K562 (cell line): ENCODE measurements at regions of chr5 and their contacts with region 1.

Region 1: GRCh38 chr5:137778772-137779564 is 24.8 kb upstream of the HNRNPA0 start:
- DNase-seq: peak; percentile 20 to 65 (median 28)
- ATAC-seq: peak; percentile 56; the same call in 1 of the 3 replicates
- H3K4me3 ChIP-seq: no peak overlapping the region
- H3K27ac ChIP-seq: no peak overlapping the region
- H3K4me1 ChIP-seq: no peaks in the 10 kb centered on the region
- H3K27me3 ChIP-seq: peaks cover 3 to 12% of the 10 kb centered on the region in 2 experiments; a peak in 2 of 5 replicates
- CTCF ChIP-seq: peak; percentile 59 to 83 (median 61); a peak in 5 of 6 replicates
- EP300 ChIP-seq: no peak
- POLR2A ChIP-seq: no peak
- RAD21 ChIP-seq: peak; percentile 71

Region 2: DNA sequence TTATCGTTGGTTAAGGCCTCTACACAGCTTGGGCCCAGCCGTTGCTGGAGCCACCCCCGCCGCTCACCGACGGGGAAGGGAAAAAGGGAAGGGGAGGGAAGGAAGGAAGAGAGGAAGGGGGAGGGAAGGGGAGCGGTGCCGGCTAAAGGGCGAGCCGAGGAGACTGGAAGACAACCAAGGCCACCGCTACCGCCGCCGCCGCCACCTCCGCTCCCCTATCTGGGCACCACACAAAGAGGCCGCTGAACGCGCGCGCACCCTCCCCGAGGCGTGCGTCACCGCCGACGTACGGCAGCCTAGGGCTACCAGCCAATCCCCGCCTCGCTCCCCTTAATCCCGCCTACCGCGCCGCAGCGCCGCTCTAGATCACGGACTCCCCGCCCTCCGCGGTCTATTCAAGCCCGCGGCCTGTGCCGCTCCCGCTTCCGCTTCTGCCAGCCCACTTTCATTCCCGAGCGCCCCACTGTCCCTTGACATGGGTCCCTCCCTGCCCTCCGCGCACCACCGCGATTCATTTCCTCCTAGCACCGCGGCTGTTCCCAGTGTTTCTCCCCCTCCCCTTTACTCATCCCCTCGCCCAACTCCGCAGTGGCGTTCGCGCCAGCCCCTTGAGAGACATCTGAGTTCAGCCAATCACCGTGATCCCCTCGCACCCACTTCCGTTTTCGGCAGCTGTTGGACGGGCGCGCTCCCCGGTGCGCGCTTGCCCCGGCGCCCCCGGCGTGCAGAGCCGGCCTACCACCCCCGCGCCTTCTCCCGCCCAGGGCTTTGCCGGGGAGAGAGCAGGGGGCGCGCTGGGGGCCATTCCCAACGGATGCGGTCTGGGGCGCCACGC is 24.6 kb before region 1 on chr5 and contains the start of gene HNRNPA0:
- CTCF ChIA-PET with region 1: no interaction called
- POLR2A ChIA-PET with region 1: interaction called, 10 read pairs
- in situ Hi-C with region 1: no loop called
- intact Hi-C with region 1: no loop called
- DNase-seq: peak; percentile 94 to 98 (median 96)
- ATAC-seq: peak; percentile 91
- H3K4me3 ChIP-seq: peak within 1 kb of the TSS; percentile 76
- H3K27ac ChIP-seq: peak within 1 kb of the TSS; percentile 97
- H3K4me1 ChIP-seq: peaks cover 0 to 16% of the 10 kb centered on the region in 2 experiments; a peak in 3 of 5 replicates
- H3K27me3 ChIP-seq: peaks cover 5 to 6% of the 10 kb centered on the region in 2 experiments; a peak in 3 of 5 replicates
- CTCF ChIP-seq: peak in 2 of 3 experiments; percentile 17 to 33; a peak in 2 of 6 replicates
- EP300 ChIP-seq: peak; percentile 96
- POLR2A ChIP-seq: peak; percentile 98
- RAD21 ChIP-seq: no peak
- polyA plus RNA-seq, gene HNRNPA0: 5.0 to 5.7 TPM

Region 3: DNA sequence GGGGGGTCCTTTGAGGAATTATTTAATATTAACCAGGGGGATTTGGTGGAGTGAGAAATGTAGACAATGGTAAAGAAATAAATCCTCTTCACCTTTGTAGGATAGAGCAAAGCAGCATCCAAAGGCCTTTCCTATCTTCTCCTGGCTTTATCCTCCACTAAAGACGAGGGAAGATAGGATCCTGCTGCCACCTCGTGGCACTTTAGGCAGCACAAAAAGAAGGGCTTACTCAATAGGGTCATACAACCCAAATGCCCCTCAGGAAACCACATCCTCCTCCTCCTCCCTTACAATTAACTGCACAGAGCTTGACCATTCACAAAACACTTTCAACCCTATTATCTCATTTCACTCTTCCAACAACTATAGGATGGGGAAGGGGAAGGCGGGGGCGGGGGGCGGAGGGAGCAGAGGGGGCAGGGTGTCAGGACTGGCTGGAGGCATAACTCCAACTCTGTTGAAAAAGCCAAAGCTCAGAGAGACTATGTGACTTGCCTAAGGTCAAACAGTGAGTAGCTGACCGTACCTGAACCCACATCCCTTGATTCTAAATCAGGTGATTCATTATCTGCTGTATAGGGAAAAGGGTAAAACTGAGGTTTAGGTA is 43.3 kb after region 1 on chr5:
- CTCF ChIA-PET with region 1: no interaction called
- POLR2A ChIA-PET with region 1: no interaction called
- in situ Hi-C with region 1: no loop called
- intact Hi-C with region 1: loop called (anchors 2 kb)
- DNase-seq: peak; percentile 9 to 41 (median 28)
- ATAC-seq: peak; percentile 83
- H3K4me3 ChIP-seq: no peak overlapping the region
- H3K27ac ChIP-seq: no peak overlapping the region
- H3K4me1 ChIP-seq: no peaks in the 10 kb centered on the region
- H3K27me3 ChIP-seq: 0 out of 5 replicates have a peak, but pooled peaks cover 0 to 2% of the 10 kb centered on the region in 2 experiments
- CTCF ChIP-seq: peak; percentile 25 to 62 (median 56); a peak in 3 of 6 replicates
- EP300 ChIP-seq: no peak
- POLR2A ChIP-seq: no peak
- RAD21 ChIP-seq: peak in 1 of 2 experiments; percentile 54; a peak in 2 of 4 replicates

Region 4: DNA sequence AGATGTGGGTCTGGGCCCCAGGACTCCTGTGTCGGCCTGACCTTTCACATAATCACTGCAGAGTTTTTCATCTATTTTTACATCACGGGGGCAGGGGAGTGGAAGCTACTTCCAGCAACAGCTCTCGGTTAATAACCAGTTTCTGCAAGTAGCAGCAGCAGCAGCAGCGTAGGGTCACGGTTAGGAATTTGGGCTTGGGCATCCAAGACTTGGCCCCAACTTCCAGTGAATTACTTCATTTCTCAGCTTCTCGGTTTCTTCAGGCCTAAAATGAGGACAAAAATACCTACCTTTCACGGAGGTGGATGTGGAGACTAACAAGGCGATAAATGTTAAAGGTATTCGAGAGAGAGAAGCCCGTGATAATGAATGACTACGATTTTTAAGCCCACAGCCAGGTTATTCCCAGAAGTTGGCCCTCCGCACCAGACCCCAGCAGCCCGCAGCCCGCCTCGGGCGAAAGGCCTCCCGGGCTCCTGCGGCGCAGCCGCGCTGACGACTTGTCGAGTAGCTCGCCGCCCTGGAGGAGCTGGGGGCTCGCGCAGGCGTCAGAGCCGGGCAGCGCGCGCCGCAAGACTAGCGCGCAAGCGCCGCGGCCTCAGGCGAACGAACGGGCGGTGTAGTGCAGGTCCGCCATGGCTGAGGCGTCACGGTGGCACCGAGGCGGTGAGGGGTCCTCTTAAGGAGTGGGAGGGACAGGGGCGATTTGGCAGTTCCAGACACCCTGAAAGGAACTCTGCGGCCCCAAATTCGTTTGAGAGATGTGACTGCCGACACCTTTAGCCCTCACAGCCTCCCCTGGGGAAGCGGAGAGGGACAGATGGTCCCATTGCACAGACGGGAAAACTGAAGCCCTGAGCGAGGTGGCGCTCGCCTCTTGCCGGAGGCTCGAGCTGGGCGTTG is 110.1 kb after region 1 on chr5 and contains the start of gene PKD2L2:
- CTCF ChIA-PET with region 1: no interaction called
- POLR2A ChIA-PET with region 1: no interaction called
- in situ Hi-C with region 1: no loop called
- intact Hi-C with region 1: loop called (anchors 5 kb)
- DNase-seq: peak; percentile 70 to 94 (median 82)
- ATAC-seq: peak; percentile 99
- H3K4me3 ChIP-seq: peak within 1 kb of the TSS; percentile 58
- H3K27ac ChIP-seq: peak within 1 kb of the TSS; percentile 85
- H3K4me1 ChIP-seq: peaks cover 4 to 14% of the 10 kb centered on the region in 2 experiments; a peak in 3 of 5 replicates
- H3K27me3 ChIP-seq: no peaks in the 10 kb centered on the region
- CTCF ChIP-seq: no peak
- EP300 ChIP-seq: no peak
- POLR2A ChIP-seq: peak; percentile 93
- RAD21 ChIP-seq: no peak
- polyA plus RNA-seq, gene PKD2L2: 0.08 to 0.11 TPM

Region 5: DNA sequence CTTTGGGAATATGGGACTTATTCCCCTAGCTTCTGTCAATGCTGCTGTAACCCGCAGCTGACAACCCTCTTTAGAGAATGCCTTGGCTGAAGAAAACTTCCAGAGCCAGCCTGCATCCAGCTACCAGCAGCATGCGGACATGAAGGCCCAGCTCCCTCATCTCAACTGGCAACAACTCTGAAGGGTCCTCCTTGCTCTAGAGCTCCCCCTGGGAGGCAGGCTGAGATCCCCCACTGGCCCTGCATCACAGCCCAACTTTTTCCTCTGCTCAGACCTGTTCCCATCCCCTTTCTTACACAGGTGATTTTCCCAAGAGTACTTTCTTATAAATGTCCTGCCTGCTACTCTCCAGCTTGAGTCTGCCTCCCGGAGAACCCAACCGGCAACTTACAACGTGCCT is 286.1 kb after region 1 on chr5:
- CTCF ChIA-PET with region 1: interaction called, 12 read pairs
- POLR2A ChIA-PET with region 1: no interaction called
- in situ Hi-C with region 1: no loop called
- intact Hi-C with region 1: loop called (anchors 2 kb)
- DNase-seq: peak in 2 of 4 experiments; percentile 33 to 41
- ATAC-seq: peak; percentile 80
- H3K4me3 ChIP-seq: no peak overlapping the region
- H3K27ac ChIP-seq: no peak overlapping the region
- H3K4me1 ChIP-seq: peaks cover 0 to 3% of the 10 kb centered on the region in 2 experiments; a peak in 2 of 5 replicates
- H3K27me3 ChIP-seq: no peaks in the 10 kb centered on the region
- CTCF ChIP-seq: peak; percentile 68 to 76 (median 75)
- EP300 ChIP-seq: no peak
- POLR2A ChIP-seq: no peak
- RAD21 ChIP-seq: peak in 1 of 2 experiments; percentile 54; a peak in 2 of 4 replicates

Region 6: DNA sequence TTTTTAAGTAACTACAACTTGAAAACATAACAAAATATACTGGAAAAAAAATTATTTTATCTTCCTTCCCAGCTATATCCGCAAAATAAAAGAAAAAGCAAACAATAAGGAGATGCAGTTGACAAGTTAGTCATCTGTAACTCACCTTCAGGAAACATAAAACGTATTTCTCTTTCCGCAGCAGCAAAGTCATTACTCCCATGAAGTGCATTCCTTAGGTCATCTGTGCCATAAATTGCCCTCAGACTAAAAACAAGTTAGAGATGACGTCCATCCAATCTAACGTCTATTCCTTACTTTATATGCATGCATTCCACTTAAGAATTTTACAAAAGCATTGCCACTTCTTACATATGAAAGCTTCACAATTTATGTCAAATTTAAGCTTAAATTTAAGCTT is 349.4 kb after region 1 on chr5:
- CTCF ChIA-PET with region 1: interaction called, 12 read pairs
- POLR2A ChIA-PET with region 1: no interaction called
- in situ Hi-C with region 1: no loop called
- intact Hi-C with region 1: loop called (anchors 1 kb)
- DNase-seq: no peak
- ATAC-seq: no peak
- H3K4me3 ChIP-seq: no peak overlapping the region
- H3K27ac ChIP-seq: no peak overlapping the region
- H3K4me1 ChIP-seq: no peaks in the 10 kb centered on the region
- H3K27me3 ChIP-seq: peaks cover 7 to 8% of the 10 kb centered on the region in 2 experiments; a peak in 2 of 5 replicates
- CTCF ChIP-seq: no peak
- EP300 ChIP-seq: no peak
- POLR2A ChIP-seq: no peak
- RAD21 ChIP-seq: no peak

Region 7: DNA sequence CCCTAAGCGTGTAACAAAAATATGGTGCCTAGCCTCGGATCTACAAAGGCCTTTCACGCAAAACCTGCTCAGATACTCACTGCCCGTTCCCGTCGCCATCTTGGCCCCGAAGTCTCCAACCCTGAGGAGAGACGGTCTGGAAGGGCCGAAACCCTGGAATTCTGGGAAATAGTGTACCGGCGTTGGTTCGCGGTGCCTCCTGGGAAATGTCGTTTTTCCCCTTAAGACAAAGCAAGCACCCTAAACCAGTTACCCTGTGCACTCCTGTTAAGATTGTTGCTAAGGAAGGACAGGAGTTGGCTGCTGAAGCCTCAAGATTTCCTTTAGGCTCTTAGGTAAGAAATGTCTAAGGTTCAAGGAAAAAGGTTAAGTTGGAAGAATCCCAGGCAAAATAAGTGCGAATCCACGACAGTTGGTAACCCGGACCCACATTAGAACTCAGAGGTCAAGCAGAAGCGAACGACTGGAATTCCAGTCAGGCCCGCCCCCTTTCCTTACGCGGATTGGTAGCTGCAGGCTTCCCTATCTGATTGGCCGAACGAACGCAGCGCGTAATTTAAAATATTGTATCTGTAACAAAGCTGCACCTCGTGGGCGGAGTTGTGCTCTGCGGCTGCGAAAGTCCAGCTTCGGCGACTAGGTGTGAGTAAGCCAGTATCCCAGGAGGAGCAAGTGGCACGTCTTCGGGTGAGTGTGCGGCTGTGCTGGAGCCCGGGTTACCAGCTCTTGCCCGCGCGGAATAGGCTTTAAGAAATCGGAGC is 399.7 kb after region 1 on chr5 and contains the starts of genes BRD8 and KIF20A:
- CTCF ChIA-PET with region 1: no interaction called
- POLR2A ChIA-PET with region 1: no interaction called
- in situ Hi-C with region 1: no loop called
- intact Hi-C with region 1: no loop called
- DNase-seq: peak; percentile 86 to 98 (median 91)
- ATAC-seq: peak; percentile 90
- H3K4me3 ChIP-seq: peak within 1 kb of the TSS; percentile 63
- H3K27ac ChIP-seq: peak within 1 kb of the TSS; percentile 99
- H3K4me1 ChIP-seq: peaks cover 0 to 5% of the 10 kb centered on the region in 2 experiments; a peak in 1 of 5 replicates
- H3K27me3 ChIP-seq: no peaks in the 10 kb centered on the region
- CTCF ChIP-seq: no peak; a peak in 1 of 6 replicates
- EP300 ChIP-seq: no peak
- POLR2A ChIP-seq: peak; percentile 94
- RAD21 ChIP-seq: no peak
- polyA plus RNA-seq, gene BRD8: 89.5 to 141 TPM
- polyA plus RNA-seq, gene KIF20A: 39.8 to 58.7 TPM